HepG2 (cell line): ENCODE measurements at regions of chr20 and their contacts with region 1.

Region 1: DNA sequence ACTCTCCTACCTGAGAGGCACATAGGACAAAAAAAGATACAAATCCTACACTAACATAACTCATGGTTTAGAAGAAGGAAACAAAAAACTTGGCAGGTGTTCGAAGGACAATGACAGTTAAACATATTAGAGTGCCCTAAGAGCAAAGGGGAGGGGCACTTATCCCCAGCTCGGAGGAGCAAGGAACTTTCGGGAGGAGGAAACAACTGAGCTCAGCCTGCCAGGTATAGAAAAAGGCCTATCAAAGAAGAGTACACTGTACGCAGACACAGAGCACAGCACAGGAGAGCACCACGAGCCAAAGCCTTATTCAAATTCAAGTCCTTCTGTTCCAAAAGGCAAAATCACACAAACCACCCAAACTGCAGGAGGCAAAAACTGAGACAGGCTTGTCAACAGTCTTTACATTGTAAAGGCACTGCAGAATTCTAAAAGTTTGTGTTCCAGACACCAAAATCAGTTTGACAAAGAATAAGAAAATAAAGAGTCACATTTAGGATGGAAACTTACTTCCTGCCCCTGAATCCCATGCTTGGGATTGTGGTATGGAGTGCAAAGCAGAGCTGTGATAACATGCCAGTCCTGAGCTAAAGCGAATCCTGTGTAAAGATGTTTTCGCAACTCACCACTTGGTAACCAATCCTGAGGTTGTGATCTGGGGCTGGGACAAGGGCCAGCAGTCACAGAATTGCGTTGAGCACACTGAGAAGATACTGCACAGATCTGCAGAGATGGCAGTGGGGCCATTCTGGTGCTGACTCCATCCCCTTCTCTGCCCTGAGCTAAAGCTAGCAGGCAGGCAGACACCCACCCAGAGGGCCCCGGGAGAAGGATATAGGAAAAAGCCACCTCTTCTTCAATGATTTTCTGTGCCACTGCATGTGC is 108.6 kb downstream of the CHD6 start:
- DNase-seq: peak; percentile 72
- ATAC-seq: peak; percentile 82
- H3K4me3 ChIP-seq: no peak overlapping the region
- H3K27ac ChIP-seq: peak overlapping the region; percentile 15
- H3K4me1 ChIP-seq: peaks cover 61% of the 10 kb centered on the region
- H3K27me3 ChIP-seq: no peaks in the 10 kb centered on the region
- CTCF ChIP-seq: no peak
- EP300 ChIP-seq: no peak
- POLR2A ChIP-seq: no peak
- RAD21 ChIP-seq: no peak

Region 2: GRCh38 chr20:41213150-41213820 is 296.3 kb before region 1 on chr20:
- CTCF ChIA-PET with region 1: no interaction called
- POLR2A ChIA-PET with region 1: no interaction called
- in situ Hi-C with region 1: no loop called
- intact Hi-C with region 1: no loop called
- DNase-seq: no peak
- ATAC-seq: peak; percentile 22; the same call in 1 of the 3 replicates
- H3K4me3 ChIP-seq: no peak overlapping the region
- H3K27ac ChIP-seq: no peak overlapping the region
- H3K4me1 ChIP-seq: no peaks in the 10 kb centered on the region
- H3K27me3 ChIP-seq: no peaks in the 10 kb centered on the region
- CTCF ChIP-seq: no peak
- EP300 ChIP-seq: no peak
- POLR2A ChIP-seq: no peak
- RAD21 ChIP-seq: no peak

Region 3: DNA sequence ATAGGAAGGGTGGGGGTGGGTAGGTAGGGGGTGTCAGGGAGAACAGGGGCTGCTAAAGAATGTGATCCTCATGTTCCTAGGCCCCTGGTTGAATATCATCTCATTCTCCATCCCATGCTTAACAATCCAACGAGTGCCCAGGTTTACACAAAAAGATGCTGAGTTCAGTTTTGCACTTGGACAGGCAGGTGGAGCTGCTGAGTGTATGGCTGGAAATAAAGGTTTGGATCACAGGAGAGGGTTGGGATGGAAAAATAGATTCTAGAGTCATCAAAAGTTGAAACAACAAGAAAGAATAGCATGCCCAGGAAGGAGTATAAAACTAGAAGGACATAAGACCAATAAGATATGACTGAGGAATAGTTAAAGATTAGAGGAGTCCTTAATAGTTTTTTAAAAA is 94.5 kb after region 1 on chr20:
- CTCF ChIA-PET with region 1: no interaction called
- POLR2A ChIA-PET with region 1: no interaction called
- in situ Hi-C with region 1: no loop called
- intact Hi-C with region 1: loop called (anchors 5 kb)
- DNase-seq: no peak
- ATAC-seq: peak; percentile 60
- H3K4me3 ChIP-seq: no peak overlapping the region
- H3K27ac ChIP-seq: no peak overlapping the region
- H3K4me1 ChIP-seq: peaks cover 21% of the 10 kb centered on the region; the same call in 1 of the 2 replicates
- H3K27me3 ChIP-seq: no peaks in the 10 kb centered on the region
- CTCF ChIP-seq: peak; percentile 35
- EP300 ChIP-seq: no peak
- POLR2A ChIP-seq: no peak
- RAD21 ChIP-seq: no peak

Region 4: GRCh38 chr20:41693136-41693979 is 183.8 kb after region 1 on chr20:
- CTCF ChIA-PET with region 1: no interaction called
- POLR2A ChIA-PET with region 1: no interaction called
- in situ Hi-C with region 1: no loop called
- intact Hi-C with region 1: loop called (anchors 5 kb)
- DNase-seq: peak; percentile 95
- ATAC-seq: peak; percentile 96
- H3K4me3 ChIP-seq: peak overlapping the region; percentile 67 to 85 (median 73)
- H3K27ac ChIP-seq: peak overlapping the region; percentile 80
- H3K4me1 ChIP-seq: peaks cover 16% of the 10 kb centered on the region
- H3K27me3 ChIP-seq: peaks cover 0 to 9% of the 10 kb centered on the region in 2 experiments; a peak in 2 of 5 replicates
- CTCF ChIP-seq: peak; percentile 72
- EP300 ChIP-seq: no peak
- POLR2A ChIP-seq: peak; percentile 86 to 91
- RAD21 ChIP-seq: peak; percentile 63